ENCODE measurements at regions of chr6 and their contacts with region 1.

Region 1: DNA sequence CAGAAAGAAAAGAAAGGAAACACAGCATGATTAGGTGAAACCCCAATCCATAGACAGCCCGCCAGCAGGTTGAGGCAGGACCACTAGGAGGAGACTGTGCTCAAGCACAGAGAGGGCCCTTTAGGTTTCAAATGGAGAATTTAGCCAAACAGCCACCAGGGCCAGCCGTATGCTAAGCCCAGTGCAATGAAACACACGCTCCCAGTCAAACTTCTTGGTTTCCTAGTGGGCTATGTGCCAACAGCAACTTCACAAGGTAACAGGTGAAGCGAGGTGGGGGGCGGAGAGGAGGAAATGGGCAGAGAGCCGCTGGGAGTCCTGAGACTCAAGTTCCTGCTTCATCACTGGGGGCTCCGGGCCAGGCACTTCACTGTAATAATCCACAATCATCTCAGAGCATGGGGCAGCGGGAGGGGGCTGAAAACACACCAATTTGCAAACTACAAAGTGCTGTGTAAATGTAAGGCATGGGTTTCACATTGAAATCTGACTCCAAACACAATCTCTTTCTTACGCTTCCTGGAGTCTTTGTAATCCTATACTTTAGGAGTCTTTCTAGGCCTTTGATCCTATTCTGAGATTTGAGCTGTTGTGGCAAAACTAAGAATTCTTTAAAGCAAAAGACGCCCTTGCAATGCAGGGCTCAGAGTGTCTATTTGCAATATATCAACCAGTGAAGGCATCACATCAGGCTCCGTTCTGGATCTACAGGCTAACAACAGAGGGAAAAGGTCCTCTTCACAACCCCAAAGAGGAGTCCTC is 117.3 kb downstream of the OPRM1 start:
- DNase-seq: peak; percentile 52 to 63
- H3K4me3 ChIP-seq: no peak overlapping the region
- H3K27ac ChIP-seq: no peak overlapping the region
- H3K4me1 ChIP-seq: 0 out of 2 replicates have a peak, but pooled peaks cover 3% of the 10 kb centered on the region
- H3K27me3 ChIP-seq: no peaks in the 10 kb centered on the region
- CTCF ChIP-seq: peak; percentile 63

Region 2: DNA sequence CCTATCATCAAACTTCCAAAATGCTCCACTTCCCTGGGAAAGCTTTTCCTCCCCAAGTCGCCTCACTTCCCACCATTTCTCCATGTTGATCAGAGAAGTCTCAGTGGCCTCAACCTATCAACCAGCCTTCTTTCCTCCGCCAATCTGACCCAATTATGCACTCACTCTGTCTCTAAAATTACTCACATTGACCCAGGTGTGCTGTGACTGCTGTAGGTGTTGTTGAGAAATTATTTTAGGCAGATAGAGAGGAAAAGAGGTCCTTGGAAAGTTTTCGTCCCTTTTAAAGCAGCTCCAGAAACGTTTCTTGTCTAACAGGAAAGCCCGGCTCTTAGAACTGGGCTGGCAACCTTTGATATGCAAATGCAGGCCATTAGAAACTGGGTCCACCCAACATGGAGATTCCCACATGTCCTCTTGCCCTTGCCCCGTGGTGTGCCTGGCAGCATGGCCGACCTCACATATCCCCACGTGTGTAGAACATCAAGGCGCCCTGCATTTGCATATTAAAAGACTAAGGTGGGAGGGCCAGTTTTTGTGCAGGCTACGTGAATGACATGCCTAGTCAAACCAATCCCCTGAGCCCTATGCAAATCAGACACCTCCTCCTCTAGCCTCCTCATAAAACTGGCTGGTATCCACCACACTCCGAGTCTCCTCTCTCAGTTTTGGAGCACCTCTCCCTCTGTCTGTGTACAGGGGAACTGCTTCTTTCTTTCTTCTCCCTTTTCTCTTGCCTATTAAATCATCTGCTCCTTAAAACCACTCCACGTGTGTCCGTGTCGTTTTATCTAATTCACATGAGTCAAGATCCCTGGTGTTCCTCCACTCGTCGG is 187.4 kb after region 1 on chr6:
- CTCF ChIA-PET with region 1: no interaction called
- POLR2A ChIA-PET with region 1: no interaction called
- intact Hi-C with region 1: loop called (anchors 1 kb)
- DNase-seq: peak; percentile 76 to 92
- H3K4me3 ChIP-seq: peak overlapping the region; percentile 42; the same call in 1 of the 2 replicates
- H3K27ac ChIP-seq: peak overlapping the region; percentile 38
- H3K4me1 ChIP-seq: 0 out of 2 replicates have a peak, but pooled peaks cover 4% of the 10 kb centered on the region
- H3K27me3 ChIP-seq: no peaks in the 10 kb centered on the region
- CTCF ChIP-seq: peak; percentile 70

Region 3: GRCh38 chr6:154410619-154411072 is 254.3 kb after region 1 on chr6:
- CTCF ChIA-PET with region 1: no interaction called
- POLR2A ChIA-PET with region 1: no interaction called
- intact Hi-C with region 1: loop called (anchors 10 kb)
- DNase-seq: peak; percentile 54 to 84
- H3K4me3 ChIP-seq: no peak overlapping the region
- H3K27ac ChIP-seq: peak overlapping the region; percentile 67
- H3K4me1 ChIP-seq: peaks cover 17% of the 10 kb centered on the region
- H3K27me3 ChIP-seq: no peaks in the 10 kb centered on the region
- CTCF ChIP-seq: no peak

Region 4: GRCh38 chr6:154615483-154616025 is 459.2 kb after region 1 on chr6:
- CTCF ChIA-PET with region 1: no interaction called
- POLR2A ChIA-PET with region 1: no interaction called
- intact Hi-C with region 1: loop called (anchors 5 kb)
- DNase-seq: peak; percentile 57 to 74
- H3K4me3 ChIP-seq: no peak overlapping the region
- H3K27ac ChIP-seq: no peak overlapping the region
- H3K4me1 ChIP-seq: peaks cover 16% of the 10 kb centered on the region
- H3K27me3 ChIP-seq: no peaks in the 10 kb centered on the region
- CTCF ChIP-seq: no peak

Region 5: DNA sequence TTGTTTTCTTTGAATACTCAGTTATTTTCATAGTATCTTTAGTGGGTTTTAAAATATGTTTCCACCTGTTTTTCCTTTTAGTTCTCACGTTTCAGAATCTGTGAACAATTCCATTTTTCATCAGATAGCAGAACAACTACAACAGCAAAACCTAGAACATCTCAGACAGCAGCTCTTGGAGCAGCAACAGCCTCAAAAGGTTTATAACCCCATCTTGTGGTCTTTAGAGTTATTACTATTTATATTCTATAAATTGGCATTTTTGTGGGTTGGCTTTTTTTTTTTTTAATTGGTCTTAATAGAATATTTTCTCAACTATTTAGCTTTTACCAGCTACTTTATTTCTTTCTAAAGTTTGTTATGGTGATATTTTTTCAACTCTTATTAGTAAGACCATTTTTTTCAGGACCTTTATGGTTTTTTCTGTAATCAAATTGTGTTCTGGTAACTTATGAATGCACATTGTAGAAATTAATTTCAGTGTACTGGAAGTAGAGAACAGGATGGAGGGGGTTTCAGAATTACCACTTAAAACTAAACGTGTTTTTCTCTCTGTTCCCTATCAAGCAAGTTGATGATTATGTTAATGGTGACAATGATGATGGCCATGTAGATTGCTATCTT is 649.1 kb after region 1 on chr6:
- CTCF ChIA-PET with region 1: no interaction called
- POLR2A ChIA-PET with region 1: no interaction called
- intact Hi-C with region 1: loop called (anchors 5 kb)
- DNase-seq: no peak
- H3K4me3 ChIP-seq: no peak overlapping the region
- H3K27ac ChIP-seq: no peak overlapping the region
- H3K4me1 ChIP-seq: no peaks in the 10 kb centered on the region
- H3K27me3 ChIP-seq: no peaks in the 10 kb centered on the region
- CTCF ChIP-seq: peak; percentile 69

Region 6: GRCh38 chr6:155248008-155249001 is 1092.0 kb after region 1 on chr6:
- CTCF ChIA-PET with region 1: interaction called, 7 read pairs
- POLR2A ChIA-PET with region 1: no interaction called
- intact Hi-C with region 1: loop called (anchors 5 kb)
- DNase-seq: peak; percentile 61 to 81
- H3K4me3 ChIP-seq: peak overlapping the region; percentile 54
- H3K27ac ChIP-seq: peak overlapping the region; percentile 96
- H3K4me1 ChIP-seq: peaks cover 31% of the 10 kb centered on the region
- H3K27me3 ChIP-seq: no peaks in the 10 kb centered on the region
- CTCF ChIP-seq: peak; percentile 82

Measured in PC-9 (cell line).